ENCODE measurements at regions of chr12 and their contacts with region 1.

Region 1: GRCh38 chr12:1410798-1411197 is 183.6 kb downstream of the FBXL14 start:
- DNase-seq: no peak
- ATAC-seq: no peak
- H3K4me3 ChIP-seq: no peak overlapping the region
- H3K27ac ChIP-seq: no peak overlapping the region
- H3K4me1 ChIP-seq: no peaks in the 10 kb centered on the region
- H3K27me3 ChIP-seq: no peaks in the 10 kb centered on the region
- CTCF ChIP-seq: no peak
- POLR2A ChIP-seq: no peak

Region 2: GRCh38 chr12:1425396-1425729 is 14.6 kb after region 1 on chr12:
- intact Hi-C with region 1: loop called in 1 of 10 experiments (anchors 2 kb)
- DNase-seq: no peak
- ATAC-seq: no peak
- H3K4me3 ChIP-seq: no peak overlapping the region
- H3K27ac ChIP-seq: no peak overlapping the region
- H3K4me1 ChIP-seq: peaks cover 0 to 25% (median 4%) of the 10 kb centered on the region in 12 donors
- H3K27me3 ChIP-seq: no peaks in the 10 kb centered on the region
- CTCF ChIP-seq: no peak
- POLR2A ChIP-seq: no peak